CD4-positive, alpha-beta memory T cell (primary cell): ENCODE measurements at regions of chrX and their contacts with region 1.

Region 1: GRCh38 chrX:79161655-79162054 is 17.2 kb downstream of the GPR174 start:
- DNase-seq: peak; percentile 73 to 85 (median 79)
- H3K4me3 ChIP-seq: peak overlapping the region; percentile 45 to 55
- H3K4me3 Mint-ChIP-seq: peak overlapping the region; percentile 75 to 97 (median 94)
- H3K27ac ChIP-seq: peak overlapping the region; percentile 51
- H3K27ac Mint-ChIP-seq: peak overlapping the region; percentile 87 to 98 (median 95)
- H3K4me1 ChIP-seq: peaks cover 90% of the 10 kb centered on the region
- H3K4me1 Mint-ChIP-seq: peaks cover 37 to 85% (median 53%) of the 10 kb centered on the region in 4 donors
- H3K27me3 ChIP-seq: no peaks in the 10 kb centered on the region
- H3K27me3 Mint-ChIP-seq: no peaks in the 10 kb centered on the region

Region 2: DNA sequence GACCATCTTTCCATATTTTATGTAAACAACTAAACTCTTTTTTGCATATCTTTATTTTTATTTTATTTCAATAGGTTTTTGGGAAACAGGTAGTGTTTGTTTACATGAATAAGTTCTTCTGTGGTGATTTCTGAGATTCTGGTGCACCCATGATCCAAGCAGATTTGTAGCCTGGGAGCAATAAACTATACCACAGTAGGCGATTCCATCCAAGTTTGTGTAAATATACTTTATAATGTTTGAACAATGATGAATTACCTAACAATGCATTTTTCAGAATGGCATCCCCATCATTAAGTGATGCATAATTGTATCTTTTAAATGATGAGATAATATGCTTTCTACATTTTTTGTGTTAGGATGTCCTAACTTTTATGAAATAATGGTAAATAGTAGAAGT is 795.1 kb before region 1 on chrX:
- CTCF ChIA-PET with region 1: no interaction called
- POLR2A ChIA-PET with region 1: no interaction called
- intact Hi-C with region 1: no loop called
- DNase-seq: no peak
- H3K4me3 ChIP-seq: no peak overlapping the region
- H3K4me3 Mint-ChIP-seq: no peak overlapping the region
- H3K27ac ChIP-seq: no peak overlapping the region
- H3K27ac Mint-ChIP-seq: no peak overlapping the region
- H3K4me1 ChIP-seq: no peaks in the 10 kb centered on the region
- H3K4me1 Mint-ChIP-seq: no peaks in the 10 kb centered on the region
- H3K27me3 ChIP-seq: no peaks in the 10 kb centered on the region
- H3K27me3 Mint-ChIP-seq: no peaks in the 10 kb centered on the region

Region 3: DNA sequence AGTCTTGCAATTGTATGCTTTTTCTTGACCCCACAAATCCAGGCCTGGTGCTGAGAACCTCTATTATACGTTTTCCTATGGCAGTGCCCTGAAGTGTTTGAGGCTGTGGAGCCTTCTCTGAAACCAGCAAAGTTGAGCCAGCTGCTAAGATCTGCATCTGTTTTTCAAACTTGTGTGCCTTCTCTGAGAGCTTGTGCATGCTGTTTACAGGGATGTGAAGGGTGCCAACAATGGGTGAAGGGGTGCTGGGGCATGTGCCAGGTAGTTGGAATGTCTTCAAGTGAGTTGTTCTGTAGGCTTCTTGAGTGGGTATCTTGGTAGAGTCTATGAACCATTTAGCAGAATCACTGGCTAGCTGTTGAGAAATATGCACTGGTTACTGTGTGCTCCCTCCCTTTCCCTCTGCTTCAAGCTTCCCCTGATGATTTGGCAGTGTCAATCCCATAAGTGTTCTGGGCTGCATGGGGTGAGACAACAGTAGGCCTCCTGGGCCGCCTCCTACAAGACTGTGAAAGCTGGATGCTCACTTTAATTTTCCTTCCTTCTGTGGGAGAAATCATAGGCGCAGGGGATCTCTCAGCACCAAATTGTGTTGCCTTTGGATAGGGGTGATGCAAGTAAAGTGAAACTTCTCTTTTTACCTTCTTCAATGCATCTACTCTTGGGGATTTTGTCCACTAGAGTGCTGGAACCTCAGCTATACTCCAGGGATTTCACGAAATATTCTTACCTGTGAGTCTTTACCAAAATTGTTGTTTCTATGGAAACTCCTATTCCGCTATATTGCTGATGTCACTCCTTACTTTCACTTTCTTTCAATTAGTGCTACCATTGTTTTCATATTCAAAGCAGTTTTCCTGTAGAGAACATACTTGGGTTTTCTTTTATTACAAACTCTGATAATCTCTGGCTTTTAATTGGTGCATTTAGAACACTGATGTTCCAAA is 175.5 kb after region 1 on chrX:
- CTCF ChIA-PET with region 1: no interaction called
- POLR2A ChIA-PET with region 1: no interaction called
- intact Hi-C with region 1: no loop called
- DNase-seq: peak in 4 of 5 donors; percentile 28 to 54 (median 43)
- H3K4me3 ChIP-seq: peak overlapping the region; percentile 22 to 28
- H3K4me3 Mint-ChIP-seq: peak overlapping the region; percentile 40 to 88 (median 81)
- H3K27ac ChIP-seq: peak overlapping the region; percentile 43
- H3K27ac Mint-ChIP-seq: peak overlapping the region; percentile 85 to 97 (median 92)
- H3K4me1 ChIP-seq: peaks cover 18% of the 10 kb centered on the region
- H3K4me1 Mint-ChIP-seq: peaks cover 4 to 16% (median 10%) of the 10 kb centered on the region in 4 donors
- H3K27me3 ChIP-seq: no peaks in the 10 kb centered on the region
- H3K27me3 Mint-ChIP-seq: no peaks in the 10 kb centered on the region

Region 4: DNA sequence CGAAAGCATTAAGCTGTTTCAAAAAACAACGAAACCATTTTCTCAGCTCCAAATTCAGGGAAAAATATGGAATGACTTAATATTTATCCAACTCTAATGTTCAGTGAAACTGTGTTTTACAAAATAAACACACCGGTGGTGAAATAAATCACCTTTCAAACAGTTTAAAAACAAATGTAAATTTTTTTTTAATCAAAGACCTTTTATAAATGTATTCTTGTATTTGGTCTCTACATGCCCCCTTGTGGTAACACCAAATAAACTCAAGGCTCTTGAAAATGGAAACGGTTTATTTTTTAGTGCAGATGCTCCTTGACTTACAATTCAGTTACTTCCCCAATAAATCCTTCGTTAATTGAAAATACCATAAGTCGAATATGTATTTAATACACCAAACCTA is 251.3 kb after region 1 on chrX:
- CTCF ChIA-PET with region 1: no interaction called
- POLR2A ChIA-PET with region 1: interaction called, 3 read pairs
- intact Hi-C with region 1: loop called (anchors 5 kb)
- DNase-seq: peak in 4 of 5 donors; percentile 48 to 54 (median 50)
- H3K4me3 ChIP-seq: peak overlapping the region; percentile 23 to 34
- H3K4me3 Mint-ChIP-seq: peak overlapping the region; percentile 71 to 84 (median 82)
- H3K27ac ChIP-seq: peak overlapping the region; percentile 56
- H3K27ac Mint-ChIP-seq: peak overlapping the region; percentile 41 to 88 (median 82)
- H3K4me1 ChIP-seq: peaks cover 7% of the 10 kb centered on the region
- H3K4me1 Mint-ChIP-seq: peaks cover 18 to 35% (median 22%) of the 10 kb centered on the region in 4 donors
- H3K27me3 ChIP-seq: no peaks in the 10 kb centered on the region
- H3K27me3 Mint-ChIP-seq: no peaks in the 10 kb centered on the region